ENCODE measurements at regions of chr18 and their contacts with region 1.

Region 1: DNA sequence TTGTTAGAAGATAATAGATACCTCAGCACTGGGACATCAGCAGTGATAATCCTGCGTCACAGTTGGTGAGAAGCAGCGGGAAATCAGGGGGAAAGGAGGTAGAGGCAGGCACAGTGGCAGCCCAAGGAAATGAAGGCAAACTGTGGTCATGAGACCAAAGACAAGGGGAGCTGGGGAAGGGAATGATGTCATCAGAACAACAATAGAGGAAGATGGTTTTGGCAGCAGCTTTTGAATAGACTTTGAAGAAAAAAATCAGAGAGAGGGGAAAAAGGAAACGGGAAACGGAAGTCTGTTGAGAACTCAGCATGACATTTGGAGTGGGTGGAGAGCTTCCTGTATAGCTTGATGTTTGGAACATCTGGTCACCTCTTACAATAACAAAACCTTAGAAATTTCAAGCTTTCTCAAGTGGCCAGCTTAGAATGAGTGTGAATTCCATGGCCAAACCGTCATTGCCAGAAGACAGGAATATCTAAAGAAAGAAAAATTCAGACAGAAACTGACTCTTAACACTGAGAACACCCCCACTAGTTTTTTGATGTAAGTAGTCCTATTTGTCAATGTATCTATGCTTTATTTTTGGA is 18.4 kb upstream of the YES1 start:
- DNase-seq: peak; percentile 52
- ATAC-seq: peak; percentile 80
- H3K4me3 Mint-ChIP-seq: peak overlapping the region; percentile 45
- H3K27ac Mint-ChIP-seq: peak overlapping the region; percentile 74
- H3K4me1 Mint-ChIP-seq: peaks cover 23% of the 10 kb centered on the region
- H3K27me3 Mint-ChIP-seq: peaks cover 7% of the 10 kb centered on the region

Region 2: DNA sequence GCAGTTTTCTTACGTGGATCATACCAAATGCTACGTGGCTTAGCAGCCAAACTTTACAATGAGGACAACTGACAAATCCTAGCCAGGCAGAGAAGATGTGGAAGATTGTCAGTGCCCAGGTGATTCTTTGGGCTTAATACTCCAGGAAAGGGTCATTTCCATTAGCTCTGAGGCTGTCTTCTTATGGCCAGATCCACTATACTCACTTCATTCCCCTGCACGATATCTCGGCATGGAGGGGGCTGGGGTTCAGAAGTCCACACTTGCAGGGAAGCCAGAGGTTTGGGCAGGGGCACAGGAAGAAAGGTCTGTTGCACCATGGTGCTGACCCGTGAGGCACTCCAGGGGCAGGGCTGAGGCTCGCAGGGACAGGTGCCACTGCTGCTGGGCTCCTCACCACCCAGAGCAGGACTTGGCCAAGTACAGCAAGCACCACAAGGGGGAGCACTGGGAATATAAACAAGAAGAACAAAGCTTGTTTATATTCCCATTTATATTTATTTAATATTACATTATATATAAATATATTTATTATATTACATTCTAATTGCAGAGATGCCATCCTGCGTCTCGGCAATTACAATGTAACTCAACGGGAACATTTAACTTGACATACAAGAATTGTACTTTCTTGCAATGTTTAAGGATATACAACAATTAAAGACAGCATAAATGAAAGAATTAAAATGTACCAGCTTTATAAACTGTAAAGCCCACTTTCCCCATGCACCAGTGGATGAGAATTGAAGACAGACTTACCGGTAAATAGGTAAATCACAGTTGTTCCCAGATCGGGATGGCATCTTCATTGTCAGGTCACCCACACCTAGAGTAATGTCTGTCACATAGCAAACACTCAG is 206.4 kb before region 1 on chr18:
- CTCF ChIA-PET with region 1: interaction called, 104 read pairs
- POLR2A ChIA-PET with region 1: interaction called, 3 read pairs
- DNase-seq: peak; percentile 80
- ATAC-seq: peak; percentile 89
- H3K4me3 Mint-ChIP-seq: no peak overlapping the region
- H3K27ac Mint-ChIP-seq: no peak overlapping the region
- H3K4me1 Mint-ChIP-seq: peaks cover 2% of the 10 kb centered on the region
- H3K27me3 Mint-ChIP-seq: peaks cover 31% of the 10 kb centered on the region

Region 3: GRCh38 chr18:681985-682384 is 148.4 kb before region 1 on chr18:
- CTCF ChIA-PET with region 1: interaction called, 28 read pairs
- POLR2A ChIA-PET with region 1: no interaction called
- DNase-seq: peak; percentile 87
- ATAC-seq: peak; percentile 96
- H3K4me3 Mint-ChIP-seq: peak overlapping the region; percentile 47
- H3K27ac Mint-ChIP-seq: peak overlapping the region; percentile 97
- H3K4me1 Mint-ChIP-seq: peaks cover 32% of the 10 kb centered on the region
- H3K27me3 Mint-ChIP-seq: no peaks in the 10 kb centered on the region

Region 4: GRCh38 chr18:725646-726045 is 104.8 kb before region 1 on chr18:
- CTCF ChIA-PET with region 1: interaction called, 29 read pairs
- POLR2A ChIA-PET with region 1: no interaction called
- DNase-seq: no peak
- ATAC-seq: no peak
- H3K4me3 Mint-ChIP-seq: no peak overlapping the region
- H3K27ac Mint-ChIP-seq: no peak overlapping the region
- H3K4me1 Mint-ChIP-seq: peaks cover under 1% of the 10 kb centered on the region
- H3K27me3 Mint-ChIP-seq: no peaks in the 10 kb centered on the region

Region 5: DNA sequence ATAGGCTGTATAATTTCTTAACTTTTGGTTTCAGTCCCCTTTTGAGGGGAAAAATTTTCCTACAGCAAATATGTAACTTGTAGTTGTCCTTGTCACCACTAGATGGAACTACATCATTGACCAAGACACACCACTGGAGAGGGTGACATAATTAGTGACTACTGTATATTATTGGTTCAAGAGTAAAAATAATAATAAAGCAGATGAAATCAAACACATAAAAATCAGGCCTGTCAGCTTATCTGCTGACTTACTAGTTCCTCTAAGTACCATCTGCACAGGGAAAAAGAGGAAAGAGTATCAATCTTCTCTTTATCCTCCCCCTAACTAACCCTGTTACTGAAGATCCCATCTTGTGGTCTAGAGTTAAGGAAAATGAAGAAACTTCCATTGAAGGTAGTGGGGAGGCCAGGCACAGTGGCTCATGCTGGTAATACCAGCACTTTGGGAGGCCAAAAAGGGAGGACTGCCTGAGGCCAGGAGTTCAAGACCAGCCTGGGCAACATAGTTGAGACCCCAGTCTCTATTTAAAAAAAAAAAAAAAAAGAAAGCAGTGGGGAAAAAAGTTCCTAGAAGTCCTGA is 88.4 kb before region 1 on chr18:
- CTCF ChIA-PET with region 1: interaction called, 219 read pairs
- POLR2A ChIA-PET with region 1: interaction called, 15 read pairs
- DNase-seq: no peak
- ATAC-seq: peak; percentile 68
- H3K4me3 Mint-ChIP-seq: no peak overlapping the region
- H3K27ac Mint-ChIP-seq: no peak overlapping the region
- H3K4me1 Mint-ChIP-seq: peaks cover 1% of the 10 kb centered on the region
- H3K27me3 Mint-ChIP-seq: no peaks in the 10 kb centered on the region

Region 6: GRCh38 chr18:765764-766549 is 64.5 kb before region 1 on chr18:
- CTCF ChIA-PET with region 1: interaction called, 10 read pairs
- POLR2A ChIA-PET with region 1: no interaction called
- DNase-seq: no peak
- ATAC-seq: no peak
- H3K4me3 Mint-ChIP-seq: no peak overlapping the region
- H3K27ac Mint-ChIP-seq: no peak overlapping the region
- H3K4me1 Mint-ChIP-seq: peaks cover 17% of the 10 kb centered on the region
- H3K27me3 Mint-ChIP-seq: no peaks in the 10 kb centered on the region

Region 7: GRCh38 chr18:805008-805754 is 25.2 kb before region 1 on chr18:
- CTCF ChIA-PET with region 1: interaction called, 170 read pairs
- POLR2A ChIA-PET with region 1: interaction called, 81 read pairs
- DNase-seq: no peak
- ATAC-seq: peak; percentile 59
- H3K4me3 Mint-ChIP-seq: peak overlapping the region; percentile 72
- H3K27ac Mint-ChIP-seq: peak overlapping the region; percentile 75
- H3K4me1 Mint-ChIP-seq: peaks cover 73% of the 10 kb centered on the region
- H3K27me3 Mint-ChIP-seq: no peaks in the 10 kb centered on the region